Activated T-helper 2 cell treated with anti-CD3 and anti-CD28 coated beads, Interferon-gamma antibody, Interleukin-2, Interleukin-4, amounts not matched to agents 10 μg/mL and 5 μg/mL and 100 μg/mL, durations not matched to agents 14 hours and 24 hours and 36 hours (primary cell): ENCODE measurements at regions of chr22 and their contacts with region 1.

Region 1: GRCh38 chr22:37608477-37609239 is at the start of gene GGA1:
- DNase-seq: peak; percentile 98
- H3K4me3 Mint-ChIP-seq: peak within 1 kb of the TSS; percentile 94
- H3K27ac Mint-ChIP-seq: peak within 1 kb of the TSS; percentile 97
- H3K4me1 Mint-ChIP-seq: peaks cover 41% of the 10 kb centered on the region
- H3K27me3 Mint-ChIP-seq: no peaks in the 10 kb centered on the region
- total RNA-seq, gene GGA1: 69.3 and 71.2 TPM in 2 replicates

Region 2: GRCh38 chr22:37591823-37592404 is 16.7 kb before region 1 on chr22:
- intact Hi-C with region 1: loop called (anchors 1 kb)
- DNase-seq: no peak
- H3K4me3 Mint-ChIP-seq: peak overlapping the region; percentile 74
- H3K27ac Mint-ChIP-seq: peak overlapping the region; percentile 34
- H3K4me1 Mint-ChIP-seq: peaks cover 9% of the 10 kb centered on the region
- H3K27me3 Mint-ChIP-seq: peaks cover 5% of the 10 kb centered on the region

Region 3: GRCh38 chr22:37623075-37624016 is 14.7 kb after region 1 on chr22:
- intact Hi-C with region 1: loop called (anchors 2 kb)
- DNase-seq: peak; percentile 67
- H3K4me3 Mint-ChIP-seq: no peak overlapping the region
- H3K27ac Mint-ChIP-seq: peak overlapping the region; percentile 70
- H3K4me1 Mint-ChIP-seq: peaks cover 20% of the 10 kb centered on the region
- H3K27me3 Mint-ChIP-seq: no peaks in the 10 kb centered on the region

Region 4: DNA sequence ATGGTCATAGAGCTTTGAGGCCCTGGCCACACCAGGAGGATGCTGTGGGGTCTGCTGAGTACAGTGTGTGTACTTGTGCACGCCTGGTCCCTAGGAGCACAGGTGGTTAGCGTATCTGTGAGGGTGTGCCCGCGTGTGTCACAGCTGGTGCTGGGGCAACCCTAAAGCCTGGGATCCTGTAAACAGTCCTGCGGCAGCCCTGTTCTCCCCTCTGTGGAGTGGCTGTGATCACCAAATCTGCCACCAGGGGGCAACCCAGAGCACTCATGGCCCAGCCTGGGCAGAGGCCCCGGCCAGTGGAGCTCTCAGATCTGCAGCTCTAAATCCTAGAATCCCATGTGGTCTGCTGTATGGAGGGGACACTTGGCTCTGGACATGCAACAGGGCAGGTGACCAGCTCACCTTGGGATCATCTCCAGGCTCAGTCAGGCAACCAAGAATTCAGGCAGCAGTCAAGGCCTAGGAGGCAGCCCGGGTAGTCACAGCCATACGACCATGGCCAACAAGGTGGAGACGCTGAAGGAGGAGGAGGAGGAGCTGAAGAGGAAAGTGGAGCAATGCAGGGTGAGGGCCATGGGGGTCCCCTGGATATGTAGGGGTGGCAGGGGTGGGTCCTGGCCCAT is 34.7 kb after region 1 on chr22:
- intact Hi-C with region 1: loop called (anchors 1 kb)
- DNase-seq: peak; percentile 79
- H3K4me3 Mint-ChIP-seq: peak overlapping the region; percentile 14
- H3K27ac Mint-ChIP-seq: peak overlapping the region; percentile 2
- H3K4me1 Mint-ChIP-seq: peaks cover 19% of the 10 kb centered on the region
- H3K27me3 Mint-ChIP-seq: no peaks in the 10 kb centered on the region

Region 5: GRCh38 chr22:37661160-37661924 is 52.7 kb after region 1 on chr22:
- intact Hi-C with region 1: no loop called
- DNase-seq: no peak
- H3K4me3 Mint-ChIP-seq: peak overlapping the region; percentile 87
- H3K27ac Mint-ChIP-seq: no peak overlapping the region
- H3K4me1 Mint-ChIP-seq: peaks cover 32% of the 10 kb centered on the region
- H3K27me3 Mint-ChIP-seq: no peaks in the 10 kb centered on the region

Region 6: DNA sequence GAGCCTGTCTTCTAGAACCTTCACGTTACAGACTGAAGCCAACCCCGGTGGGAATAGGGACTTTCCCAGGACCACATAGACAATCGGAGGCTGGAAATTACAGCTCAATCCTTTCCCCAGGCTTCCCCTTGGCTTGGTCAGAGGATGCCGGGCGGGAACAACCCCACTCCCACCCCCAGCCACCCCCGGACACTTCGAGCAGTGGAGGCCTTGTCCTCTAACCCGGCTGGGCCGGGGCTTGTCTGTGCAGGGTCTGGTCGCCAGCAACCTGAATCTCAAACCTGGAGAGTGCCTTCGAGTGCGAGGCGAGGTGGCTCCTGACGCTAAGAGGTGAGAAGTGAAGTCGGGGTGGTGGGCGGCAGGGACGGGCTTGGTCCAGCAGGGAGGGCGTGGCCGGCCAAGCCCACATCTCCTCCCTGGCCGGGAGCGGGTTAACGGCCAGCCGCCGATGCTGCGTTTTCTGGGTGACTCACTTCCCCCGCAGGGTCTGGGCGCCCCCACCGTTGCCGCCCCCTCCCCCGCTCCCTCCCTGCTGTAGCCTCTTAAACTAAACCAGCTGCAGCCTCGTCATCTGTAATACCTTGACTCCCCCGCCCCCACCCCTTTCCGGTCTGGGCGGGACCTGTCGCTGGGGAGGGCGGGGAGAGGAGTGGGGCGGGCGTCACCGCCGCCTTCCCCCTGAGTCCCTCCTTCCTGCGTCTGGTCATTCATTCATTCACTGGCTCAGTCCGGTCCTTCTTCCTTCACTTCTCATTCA is 68.3 kb after region 1 on chr22:
- intact Hi-C with region 1: loop called (anchors 2 kb)
- DNase-seq: peak; percentile 90
- H3K4me3 Mint-ChIP-seq: peak overlapping the region; percentile 95
- H3K27ac Mint-ChIP-seq: peak overlapping the region; percentile 97
- H3K4me1 Mint-ChIP-seq: peaks cover 45% of the 10 kb centered on the region
- H3K27me3 Mint-ChIP-seq: no peaks in the 10 kb centered on the region

Region 7: GRCh38 chr22:37807410-37808293 is 199.0 kb after region 1 on chr22 and contains the start of gene GCAT:
- intact Hi-C with region 1: loop called (anchors 5 kb)
- DNase-seq: peak; percentile 88
- H3K4me3 Mint-ChIP-seq: peak within 1 kb of the TSS; percentile 77
- H3K27ac Mint-ChIP-seq: no peak within 1 kb of the TSS
- H3K4me1 Mint-ChIP-seq: peaks cover 36% of the 10 kb centered on the region
- H3K27me3 Mint-ChIP-seq: peaks cover 26% of the 10 kb centered on the region
- total RNA-seq, gene GCAT: 24.2 and 25.5 TPM in 2 replicates

Region 8: GRCh38 chr22:37843741-37843990 is 235.0 kb after region 1 on chr22:
- intact Hi-C with region 1: loop called (anchors 5 kb)
- DNase-seq: peak; percentile 58
- H3K4me3 Mint-ChIP-seq: peak overlapping the region; percentile 87
- H3K27ac Mint-ChIP-seq: peak overlapping the region; percentile 88
- H3K4me1 Mint-ChIP-seq: peaks cover 22% of the 10 kb centered on the region
- H3K27me3 Mint-ChIP-seq: no peaks in the 10 kb centered on the region

Region 9: DNA sequence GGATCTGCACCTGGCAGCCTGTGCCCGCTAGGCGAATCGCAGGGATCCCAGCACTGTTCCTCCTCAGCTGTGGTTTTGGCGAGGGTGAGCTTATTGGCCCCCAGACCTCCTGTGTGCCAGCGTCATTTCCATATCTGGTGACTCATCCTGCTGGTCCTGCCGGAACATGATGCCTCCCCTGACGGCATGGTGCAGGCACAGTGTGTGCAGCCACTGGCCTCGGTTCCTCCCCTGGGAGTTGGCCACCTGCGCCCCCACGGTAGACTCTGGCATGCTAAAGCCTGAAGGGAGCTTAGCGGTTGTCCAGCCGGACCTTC is 391.3 kb after region 1 on chr22:
- intact Hi-C with region 1: no loop called
- DNase-seq: no peak
- H3K4me3 Mint-ChIP-seq: no peak overlapping the region
- H3K27ac Mint-ChIP-seq: no peak overlapping the region
- H3K4me1 Mint-ChIP-seq: no peaks in the 10 kb centered on the region
- H3K27me3 Mint-ChIP-seq: no peaks in the 10 kb centered on the region